ENCODE measurements at regions of chr11 and their contacts with region 1.

Region 1: GRCh38 chr11:59550368-59550841 is 39.1 kb downstream of the OR4D9 start:
- DNase-seq: peak; percentile 96
- H3K4me3 ChIP-seq: peak overlapping the region; percentile 25 to 88 (median 50)
- H3K27ac ChIP-seq: peak overlapping the region; percentile 88
- H3K4me1 ChIP-seq: peaks cover 21% of the 10 kb centered on the region
- H3K27me3 ChIP-seq: no peaks in the 10 kb centered on the region
- CTCF ChIP-seq: peak; percentile 24 to 60
- POLR2A ChIP-seq: no peak

Region 2: GRCh38 chr11:59273373-59273841 is 277.0 kb before region 1 on chr11:
- CTCF ChIA-PET with region 1: no interaction called
- POLR2A ChIA-PET with region 1: no interaction called
- dilution Hi-C with region 1: no loop called
- intact Hi-C with region 1: no loop called
- DNase-seq: no peak
- H3K4me3 ChIP-seq: no peak overlapping the region
- H3K27ac ChIP-seq: no peak overlapping the region
- H3K4me1 ChIP-seq: no peaks in the 10 kb centered on the region
- H3K27me3 ChIP-seq: no peaks in the 10 kb centered on the region
- CTCF ChIP-seq: no peak
- POLR2A ChIP-seq: no peak

Region 3: GRCh38 chr11:59417023-59417422 is 133.4 kb before region 1 on chr11:
- CTCF ChIA-PET with region 1: no interaction called
- POLR2A ChIA-PET with region 1: no interaction called
- dilution Hi-C with region 1: no loop called
- intact Hi-C with region 1: no loop called
- DNase-seq: no peak
- H3K4me3 ChIP-seq: no peak overlapping the region
- H3K27ac ChIP-seq: no peak overlapping the region
- H3K4me1 ChIP-seq: no peaks in the 10 kb centered on the region
- H3K27me3 ChIP-seq: peaks cover 0 to 2% of the 10 kb centered on the region in 2 experiments
- CTCF ChIP-seq: no peak
- POLR2A ChIP-seq: no peak

Region 4: GRCh38 chr11:59510940-59511589 is 39.3 kb before region 1 on chr11 and contains the start of gene OR4D9:
- CTCF ChIA-PET with region 1: interaction called, 3 read pairs
- POLR2A ChIA-PET with region 1: no interaction called
- dilution Hi-C with region 1: no loop called
- intact Hi-C with region 1: loop called (anchors 1 kb)
- DNase-seq: peak; percentile 83
- H3K4me3 ChIP-seq: peak within 1 kb of the TSS in 1 of 3 experiments; percentile 30
- H3K27ac ChIP-seq: peak within 1 kb of the TSS; percentile 50
- H3K4me1 ChIP-seq: peaks cover 17% of the 10 kb centered on the region
- H3K27me3 ChIP-seq: no peaks in the 10 kb centered on the region
- CTCF ChIP-seq: no peak
- POLR2A ChIP-seq: no peak
- total RNA-seq, gene OR4D9: not detected in 2 replicates

Region 5: GRCh38 chr11:59560702-59561469 is 10.5 kb after region 1 on chr11:
- CTCF ChIA-PET with region 1: interaction called, 4 read pairs
- POLR2A ChIA-PET with region 1: no interaction called
- dilution Hi-C with region 1: no loop called
- intact Hi-C with region 1: loop called (anchors 1 kb)
- DNase-seq: peak; percentile 88
- H3K4me3 ChIP-seq: peak overlapping the region; percentile 50 to 93 (median 70)
- H3K27ac ChIP-seq: peak overlapping the region; percentile 60
- H3K4me1 ChIP-seq: peaks cover 9% of the 10 kb centered on the region
- H3K27me3 ChIP-seq: no peaks in the 10 kb centered on the region
- CTCF ChIP-seq: no peak
- POLR2A ChIP-seq: no peak

Region 6: DNA sequence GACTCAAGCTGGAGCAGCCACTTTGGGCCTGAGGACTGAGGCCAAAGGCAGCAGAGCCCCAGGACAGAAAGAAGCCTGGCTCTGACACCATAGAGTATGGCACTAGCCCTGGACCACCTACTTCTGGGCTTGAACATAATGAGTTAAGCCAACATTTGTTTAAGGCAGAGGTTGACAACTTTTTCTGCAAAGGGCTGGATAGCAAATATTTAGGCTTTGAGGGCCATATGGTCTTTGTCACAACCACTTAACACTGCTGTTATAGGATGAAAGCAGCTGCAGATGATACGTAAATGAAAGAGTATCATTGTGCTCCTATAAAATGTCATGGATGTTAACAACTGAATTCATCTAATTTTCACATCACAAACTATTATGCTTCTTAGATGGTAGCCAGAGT is 48.6 kb after region 1 on chr11:
- CTCF ChIA-PET with region 1: no interaction called
- POLR2A ChIA-PET with region 1: no interaction called
- dilution Hi-C with region 1: no loop called
- intact Hi-C with region 1: no loop called
- DNase-seq: no peak
- H3K4me3 ChIP-seq: no peak overlapping the region
- H3K27ac ChIP-seq: no peak overlapping the region
- H3K4me1 ChIP-seq: no peaks in the 10 kb centered on the region
- H3K27me3 ChIP-seq: no peaks in the 10 kb centered on the region
- CTCF ChIP-seq: no peak
- POLR2A ChIP-seq: no peak

Region 7: DNA sequence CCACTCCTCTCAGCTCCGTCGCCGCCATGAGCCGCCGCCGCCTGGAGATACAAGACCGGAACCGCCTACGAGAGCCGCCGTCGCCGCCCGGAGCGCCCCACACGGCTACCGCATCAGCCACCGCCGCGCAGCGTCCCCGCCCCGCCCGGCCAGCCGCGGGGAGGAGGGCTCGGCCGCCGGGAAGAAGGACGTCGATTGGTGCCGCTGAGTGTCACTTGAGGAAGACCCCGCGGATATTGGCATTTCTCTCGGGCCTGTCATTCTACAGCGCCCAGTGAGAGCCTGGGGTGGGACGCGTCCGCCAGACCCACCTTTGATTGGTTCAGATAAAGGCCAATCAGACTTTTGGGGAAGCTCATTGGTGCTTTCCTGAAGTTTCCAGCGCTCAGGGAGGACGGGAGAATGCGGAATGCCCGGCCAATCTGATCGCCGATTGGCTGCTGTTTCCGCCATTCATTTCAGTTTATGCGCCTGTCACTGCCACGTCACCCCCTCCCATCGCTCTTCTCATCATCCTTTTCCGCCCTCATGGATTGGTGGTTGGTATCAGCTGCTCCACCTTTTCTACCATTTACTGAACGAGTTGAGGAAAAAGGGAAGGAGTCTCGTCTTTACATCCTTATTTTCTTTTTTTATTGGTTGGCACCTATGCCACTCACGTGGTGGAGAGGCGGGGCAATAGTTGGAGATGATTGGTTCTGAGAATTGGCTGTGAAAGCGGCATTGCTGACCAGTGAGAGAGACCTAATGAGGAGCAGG is 65.4 kb after region 1 on chr11 and contains the start of gene OSBP:
- CTCF ChIA-PET with region 1: no interaction called
- POLR2A ChIA-PET with region 1: no interaction called
- dilution Hi-C with region 1: no loop called
- intact Hi-C with region 1: loop called (anchors 2 kb)
- DNase-seq: peak; percentile 100
- H3K4me3 ChIP-seq: peak within 1 kb of the TSS; percentile 74 to 90 (median 81)
- H3K27ac ChIP-seq: peak within 1 kb of the TSS; percentile 62
- H3K4me1 ChIP-seq: peaks cover 17% of the 10 kb centered on the region
- H3K27me3 ChIP-seq: no peaks in the 10 kb centered on the region
- CTCF ChIP-seq: no peak
- POLR2A ChIP-seq: peak; percentile 84
- total RNA-seq, gene OSBP: 37.5 and 37.9 TPM in 2 replicates

Region 8: GRCh38 chr11:59668950-59669610 is 118.7 kb after region 1 on chr11 and contains the start of gene PATL1:
- CTCF ChIA-PET with region 1: interaction called, 3 read pairs
- POLR2A ChIA-PET with region 1: interaction called, 3 read pairs
- dilution Hi-C with region 1: no loop called
- intact Hi-C with region 1: loop called (anchors 2 kb)
- DNase-seq: peak; percentile 99
- H3K4me3 ChIP-seq: peak within 1 kb of the TSS; percentile 82 to 86 (median 82)
- H3K27ac ChIP-seq: peak within 1 kb of the TSS; percentile 97
- H3K4me1 ChIP-seq: peaks cover 18% of the 10 kb centered on the region
- H3K27me3 ChIP-seq: no peaks in the 10 kb centered on the region
- CTCF ChIP-seq: no peak
- POLR2A ChIP-seq: peak; percentile 95
- total RNA-seq, gene PATL1: 33.1 and 38.8 TPM in 2 replicates

Region 9: DNA sequence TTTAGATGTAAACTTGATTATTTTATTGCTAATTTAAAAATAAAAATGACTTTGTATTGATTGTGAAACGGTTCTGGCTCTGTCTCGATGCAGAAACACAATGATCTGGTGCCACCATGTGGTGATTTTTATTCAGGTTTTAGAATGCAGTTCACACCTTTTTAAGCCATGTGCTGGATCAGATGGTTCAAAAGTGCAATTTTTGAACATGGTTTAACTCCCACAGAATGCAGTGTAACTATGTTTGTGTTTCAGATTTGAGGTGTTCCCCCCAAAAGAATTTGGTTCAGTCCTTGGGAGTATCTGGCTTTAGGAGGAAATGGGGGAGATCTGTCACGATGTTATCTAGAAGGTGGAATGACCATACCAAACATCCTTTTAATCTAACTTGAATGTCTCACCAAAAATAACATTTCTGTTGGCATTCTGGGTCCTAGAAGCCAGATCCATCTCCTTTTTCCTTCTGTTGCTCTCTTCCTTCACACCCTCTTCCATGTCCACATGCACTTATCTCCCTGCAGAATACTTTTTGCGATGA is 252.3 kb after region 1 on chr11:
- CTCF ChIA-PET with region 1: no interaction called
- POLR2A ChIA-PET with region 1: no interaction called
- dilution Hi-C with region 1: no loop called
- intact Hi-C with region 1: loop called (anchors 5 kb)
- DNase-seq: peak; percentile 79
- H3K4me3 ChIP-seq: no peak overlapping the region
- H3K27ac ChIP-seq: peak overlapping the region; percentile 83
- H3K4me1 ChIP-seq: peaks cover 9% of the 10 kb centered on the region
- H3K27me3 ChIP-seq: no peaks in the 10 kb centered on the region
- CTCF ChIP-seq: peak; percentile 34 to 47
- POLR2A ChIP-seq: no peak

Region 10: GRCh38 chr11:60193687-60194433 is 643.5 kb after region 1 on chr11:
- CTCF ChIA-PET with region 1: no interaction called
- POLR2A ChIA-PET with region 1: no interaction called
- dilution Hi-C with region 1: no loop called
- intact Hi-C with region 1: loop called (anchors 10 kb)
- DNase-seq: peak; percentile 98
- H3K4me3 ChIP-seq: no peak overlapping the region
- H3K27ac ChIP-seq: peak overlapping the region; percentile 92
- H3K4me1 ChIP-seq: peaks cover 37% of the 10 kb centered on the region
- H3K27me3 ChIP-seq: no peaks in the 10 kb centered on the region
- CTCF ChIP-seq: peak; percentile 97
- POLR2A ChIP-seq: peak; percentile 21

Measured in endothelial cell of umbilical vein (primary cell).